Mammary epithelial cell (primary cell): ENCODE measurements at regions of chr6 and their contacts with region 1.

Region 1: GRCh38 chr6:11496152-11497060 is 41.1 kb upstream of the TMEM170B start:
- DNase-seq: peak; percentile 60
- H3K4me3 ChIP-seq: no peak overlapping the region
- H3K27ac ChIP-seq: peak overlapping the region; percentile 3
- H3K4me1 ChIP-seq: peaks cover 8% of the 10 kb centered on the region
- H3K27me3 ChIP-seq: no peaks in the 10 kb centered on the region
- CTCF ChIP-seq: peak; percentile 73 to 85

Region 2: DNA sequence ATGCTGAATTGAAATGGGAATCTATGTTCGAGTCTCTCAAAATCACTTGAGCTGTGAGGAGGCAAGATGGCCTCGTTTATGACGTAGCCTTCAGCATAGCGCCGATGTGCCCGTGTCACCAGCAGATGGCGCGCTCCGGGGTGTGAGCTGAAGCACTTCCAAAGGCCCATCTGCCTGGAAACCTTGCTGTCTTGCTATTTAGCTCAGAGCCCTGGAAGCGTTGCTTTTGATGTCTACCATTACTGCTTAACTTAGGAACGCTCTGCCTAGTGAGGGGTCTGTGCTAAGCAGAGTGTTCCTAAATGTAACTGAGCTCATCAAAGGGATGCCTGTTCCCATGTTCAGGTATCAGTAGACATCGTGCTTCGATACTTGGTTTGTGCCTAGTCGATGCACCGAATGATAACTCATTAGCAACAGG is 541.8 kb before region 1 on chr6:
- CTCF ChIA-PET with region 1: interaction called, 4 read pairs
- dilution Hi-C with region 1: no loop called
- in situ Hi-C with region 1: loop called (anchors 5 to 10 kb)
- intact Hi-C with region 1: loop called (anchors 1 kb)
- DNase-seq: peak; percentile 48
- H3K4me3 ChIP-seq: no peak overlapping the region
- H3K27ac ChIP-seq: no peak overlapping the region
- H3K4me1 ChIP-seq: no peaks in the 10 kb centered on the region
- H3K27me3 ChIP-seq: peaks cover 1% of the 10 kb centered on the region
- CTCF ChIP-seq: peak; percentile 93 to 98

Region 3: GRCh38 chr6:11064836-11065235 is 431.6 kb before region 1 on chr6:
- CTCF ChIA-PET with region 1: interaction called, 5 read pairs
- dilution Hi-C with region 1: no loop called
- in situ Hi-C with region 1: no loop called
- intact Hi-C with region 1: loop called (anchors 1 kb)
- DNase-seq: no peak
- H3K4me3 ChIP-seq: no peak overlapping the region
- H3K27ac ChIP-seq: no peak overlapping the region
- H3K4me1 ChIP-seq: no peaks in the 10 kb centered on the region
- H3K27me3 ChIP-seq: no peaks in the 10 kb centered on the region
- CTCF ChIP-seq: no peak

Region 4: GRCh38 chr6:11093589-11094410 is 402.6 kb before region 1 on chr6 and contains the start of gene SMIM13:
- CTCF ChIA-PET with region 1: no interaction called
- dilution Hi-C with region 1: no loop called
- in situ Hi-C with region 1: no loop called
- intact Hi-C with region 1: loop called (anchors 1 kb)
- DNase-seq: peak; percentile 95
- H3K4me3 ChIP-seq: peak within 1 kb of the TSS; percentile 81 to 100 (median 89)
- H3K27ac ChIP-seq: peak within 1 kb of the TSS; percentile 87
- H3K4me1 ChIP-seq: peaks cover 12% of the 10 kb centered on the region
- H3K27me3 ChIP-seq: no peaks in the 10 kb centered on the region
- CTCF ChIP-seq: peak; percentile 16 to 42
- total RNA-seq, gene SMIM13: 12.3 to 17.5 TPM

Region 5: DNA sequence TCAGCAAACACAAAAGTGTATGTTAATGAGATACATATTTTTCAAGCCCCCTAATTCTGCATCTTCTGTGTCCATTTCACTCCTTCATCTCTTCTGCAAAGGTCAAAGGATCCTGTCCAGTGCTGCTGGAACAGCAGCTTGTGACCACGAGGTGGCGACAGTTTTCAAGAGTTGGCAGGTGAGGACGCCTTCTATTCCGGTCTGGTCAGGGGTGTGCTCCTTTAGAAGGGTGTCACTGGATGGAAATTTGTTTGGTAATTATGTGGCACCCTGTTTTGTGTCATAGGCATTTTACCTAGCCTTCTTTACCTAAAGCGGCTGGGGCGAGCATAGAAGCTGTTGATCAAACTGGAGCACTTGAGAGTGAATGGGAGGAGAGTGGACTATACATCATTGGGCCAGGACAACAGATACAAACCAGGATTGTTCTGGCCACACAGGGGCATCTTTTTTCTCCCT is 352.0 kb before region 1 on chr6:
- CTCF ChIA-PET with region 1: interaction called, 6 read pairs
- dilution Hi-C with region 1: no loop called
- in situ Hi-C with region 1: loop called (anchors 5 to 10 kb)
- intact Hi-C with region 1: loop called (anchors 1 kb)
- DNase-seq: peak; percentile 70
- H3K4me3 ChIP-seq: no peak overlapping the region
- H3K27ac ChIP-seq: peak overlapping the region; percentile 79
- H3K4me1 ChIP-seq: peaks cover 46% of the 10 kb centered on the region
- H3K27me3 ChIP-seq: no peaks in the 10 kb centered on the region
- CTCF ChIP-seq: peak; percentile 94 to 96

Region 6: DNA sequence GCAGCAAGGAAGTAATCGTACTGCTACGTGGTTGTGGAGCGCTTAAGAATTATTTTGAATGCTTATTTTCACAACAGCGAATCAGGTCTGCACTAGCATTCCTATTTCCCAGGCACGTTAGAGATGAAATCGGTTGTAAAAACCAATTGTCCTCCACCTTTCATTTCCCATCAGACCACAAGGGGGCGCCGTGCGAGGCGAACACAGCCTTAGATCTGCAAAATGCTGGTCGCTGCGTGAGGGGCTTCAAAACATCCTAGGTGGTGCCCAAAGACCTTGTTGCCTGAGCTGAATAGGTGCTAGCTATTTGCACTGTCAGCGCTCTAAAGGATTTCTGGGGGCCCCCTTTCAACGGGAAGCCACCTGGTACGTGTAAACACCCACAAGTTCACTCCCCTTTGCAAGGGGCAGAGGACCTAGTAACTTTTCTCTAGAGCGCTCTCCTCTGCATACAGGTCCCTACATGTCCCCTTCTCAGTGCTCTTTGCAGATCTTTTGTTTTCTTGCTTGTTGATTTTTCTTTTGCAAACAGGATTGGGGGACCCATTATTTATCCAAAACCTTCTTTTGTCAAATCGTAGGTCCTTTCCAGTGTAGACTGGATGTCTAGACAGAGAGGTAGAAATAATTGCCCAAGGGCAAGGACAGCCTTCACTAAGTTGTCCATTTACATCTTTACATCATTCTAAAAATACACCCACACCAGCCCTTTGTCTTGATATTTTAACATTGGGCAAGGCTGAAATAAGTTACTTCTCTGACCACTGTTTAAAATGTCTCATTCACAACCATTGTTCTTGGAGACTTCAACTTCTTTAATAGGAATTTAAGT is 323.7 kb before region 1 on chr6:
- CTCF ChIA-PET with region 1: interaction called, 6 read pairs
- dilution Hi-C with region 1: no loop called
- in situ Hi-C with region 1: no loop called
- intact Hi-C with region 1: loop called (anchors 1 kb)
- DNase-seq: peak; percentile 32
- H3K4me3 ChIP-seq: no peak overlapping the region
- H3K27ac ChIP-seq: no peak overlapping the region
- H3K4me1 ChIP-seq: peaks cover 8% of the 10 kb centered on the region
- H3K27me3 ChIP-seq: no peaks in the 10 kb centered on the region
- CTCF ChIP-seq: peak; percentile 72 to 84

Region 7: DNA sequence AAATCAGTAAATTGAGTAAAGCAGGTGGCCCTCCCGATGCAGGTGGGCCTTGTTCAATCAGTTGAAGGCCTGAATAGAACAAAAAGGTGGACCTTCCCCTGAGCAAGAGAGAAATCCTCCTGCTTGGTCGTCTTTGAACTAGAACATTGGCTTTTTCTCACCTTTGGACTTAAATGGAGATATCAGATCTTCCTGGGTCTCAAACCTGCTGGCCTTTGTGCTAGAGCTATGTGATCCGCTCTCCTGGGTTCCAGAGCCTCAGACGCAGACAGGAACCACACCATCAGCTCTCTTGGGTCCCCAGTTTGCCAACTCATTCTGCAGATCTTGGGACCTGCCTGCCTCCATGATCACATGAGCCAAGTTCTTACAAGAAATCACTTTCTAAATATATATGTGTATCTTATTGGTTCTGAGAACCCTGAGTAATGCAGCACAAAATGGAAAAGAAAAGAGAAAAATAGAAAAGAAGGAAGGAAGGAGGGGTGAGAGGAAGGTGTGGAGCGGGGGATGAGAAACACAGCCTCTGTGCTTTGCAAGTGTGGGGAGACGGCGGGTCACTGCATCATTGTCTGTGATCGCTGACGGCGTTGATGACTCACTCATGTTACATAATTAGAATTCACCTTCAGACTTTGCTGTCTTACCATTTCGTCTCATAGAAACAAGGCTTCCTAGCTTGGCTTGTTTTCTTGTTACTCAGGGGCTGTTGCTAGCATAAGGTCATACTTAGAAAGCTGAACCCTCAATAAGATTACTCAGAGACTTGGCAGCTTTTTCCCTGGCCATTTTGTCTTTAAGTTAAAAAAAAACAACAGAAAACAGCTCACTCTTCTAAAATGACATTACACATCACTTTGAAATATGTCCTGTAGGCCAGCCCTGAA is 178.3 kb before region 1 on chr6:
- CTCF ChIA-PET with region 1: no interaction called
- dilution Hi-C with region 1: no loop called
- in situ Hi-C with region 1: no loop called
- intact Hi-C with region 1: loop called (anchors 1 kb)
- DNase-seq: peak; percentile 99
- H3K4me3 ChIP-seq: no peak overlapping the region
- H3K27ac ChIP-seq: peak overlapping the region; percentile 96
- H3K4me1 ChIP-seq: peaks cover 51% of the 10 kb centered on the region
- H3K27me3 ChIP-seq: no peaks in the 10 kb centered on the region
- CTCF ChIP-seq: no peak

Region 8: GRCh38 chr6:11542863-11543262 is 46.5 kb after region 1 on chr6:
- CTCF ChIA-PET with region 1: no interaction called
- dilution Hi-C with region 1: no loop called
- in situ Hi-C with region 1: no loop called
- intact Hi-C with region 1: no loop called
- DNase-seq: no peak
- H3K4me3 ChIP-seq: no peak overlapping the region
- H3K27ac ChIP-seq: no peak overlapping the region
- H3K4me1 ChIP-seq: peaks cover 5% of the 10 kb centered on the region
- H3K27me3 ChIP-seq: peaks cover 14% of the 10 kb centered on the region
- CTCF ChIP-seq: no peak